ENCODE measurements at regions of chr2 and their contacts with region 1.

Region 1: GRCh38 chr2:26144953-26145680 is 27.8 kb upstream of the GAREM2 start:
- DNase-seq: peak in 5 of 6 donors; percentile 49 to 71 (median 55)
- ATAC-seq: peak; percentile 78 to 93 (median 88)
- H3K4me3 ChIP-seq: peak overlapping the region in 1 of 4 donors; percentile 15
- H3K27ac ChIP-seq: peak overlapping the region in 2 of 4 donors; percentile 58 to 66
- H3K4me1 ChIP-seq: peaks cover 4 to 8% (median 7%) of the 10 kb centered on the region in 3 donors
- H3K27me3 ChIP-seq: no peaks in the 10 kb centered on the region
- CTCF ChIP-seq: peak; percentile 18 to 62 (median 48)

Region 2: DNA sequence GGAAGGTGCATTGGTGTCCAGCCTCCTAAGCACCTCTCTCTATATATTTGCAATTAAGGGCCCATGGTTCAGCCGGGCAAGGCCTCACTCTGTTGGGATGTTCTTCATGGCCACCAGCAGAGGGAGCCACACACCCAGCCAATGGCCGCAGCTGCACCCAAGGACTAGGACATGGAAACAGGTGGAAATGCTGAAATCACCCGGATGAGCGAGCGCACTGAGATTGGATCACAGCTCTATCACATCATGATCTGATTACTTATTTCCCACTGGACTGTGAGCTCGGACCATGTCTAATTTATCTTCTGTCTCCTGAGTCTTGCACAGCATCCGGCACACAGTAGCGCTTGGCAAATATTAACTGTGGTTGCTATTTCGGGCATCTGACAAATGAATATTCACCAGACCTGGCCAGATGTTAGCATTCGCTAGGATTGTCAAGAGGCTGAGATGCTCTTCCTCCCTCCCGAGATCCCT is 194.0 kb before region 1 on chr2:
- intact Hi-C with region 1: loop called in 1 of 3 experiments (anchors 5 kb)
- DNase-seq: peak; percentile 82 to 93 (median 88)
- ATAC-seq: peak; percentile 97 to 100 (median 99)
- H3K4me3 ChIP-seq: peak overlapping the region in 2 of 4 donors; percentile 3 to 30
- H3K27ac ChIP-seq: no peak overlapping the region
- H3K4me1 ChIP-seq: no peaks in the 10 kb centered on the region
- H3K27me3 ChIP-seq: no peaks in the 10 kb centered on the region
- CTCF ChIP-seq: peak; percentile 87 to 91 (median 88)

Region 3: DNA sequence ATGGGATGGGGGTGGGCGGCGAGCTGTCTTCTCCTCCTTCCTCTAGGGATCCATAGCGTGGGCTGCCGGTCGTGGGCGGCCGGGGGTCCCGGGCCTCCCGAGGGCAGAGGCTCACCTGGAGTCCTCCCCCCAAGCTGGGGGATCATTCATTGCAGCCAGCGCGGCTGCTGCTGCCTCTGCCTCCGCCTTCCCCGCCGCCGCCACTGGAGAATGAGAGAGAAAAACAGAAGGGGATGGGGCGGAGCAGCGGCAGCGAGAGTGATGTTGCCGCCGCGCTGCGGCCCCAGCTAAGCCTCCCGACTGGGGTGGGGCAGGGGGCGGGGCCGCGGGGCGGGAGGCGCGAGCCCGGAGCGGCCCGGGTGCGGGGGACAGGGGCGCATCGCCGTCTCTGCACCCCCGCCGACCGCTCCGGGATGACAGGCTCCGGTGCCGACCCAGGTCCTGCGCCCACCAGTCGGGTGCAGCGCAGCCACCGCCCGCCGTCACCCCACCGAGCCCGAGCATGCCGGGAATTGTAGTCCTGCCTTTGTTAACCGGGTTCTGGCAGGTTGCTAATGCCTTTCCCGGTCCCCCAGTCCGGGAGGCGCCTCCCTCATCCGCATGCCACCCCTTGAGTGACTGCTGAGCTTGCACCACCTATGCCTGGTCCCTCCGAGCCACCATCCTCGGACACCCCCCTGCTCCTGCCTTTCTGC is 162.7 kb before region 1 on chr2 and contains the start of gene KIF3C:
- intact Hi-C with region 1: loop called in 1 of 3 experiments (anchors 10 kb)
- DNase-seq: peak; percentile 50 to 78 (median 62)
- ATAC-seq: peak; percentile 76 to 89 (median 87)
- H3K4me3 ChIP-seq: peak within 1 kb of the TSS; percentile 69 to 85 (median 80)
- H3K27ac ChIP-seq: peak within 1 kb of the TSS in 2 of 4 donors; percentile 44 to 54
- H3K4me1 ChIP-seq: no peaks in the 10 kb centered on the region
- H3K27me3 ChIP-seq: no peaks in the 10 kb centered on the region
- CTCF ChIP-seq: no peak
- total RNA-seq, gene KIF3C: 0.38 to 8.2 (median 2.0) TPM

Region 4: DNA sequence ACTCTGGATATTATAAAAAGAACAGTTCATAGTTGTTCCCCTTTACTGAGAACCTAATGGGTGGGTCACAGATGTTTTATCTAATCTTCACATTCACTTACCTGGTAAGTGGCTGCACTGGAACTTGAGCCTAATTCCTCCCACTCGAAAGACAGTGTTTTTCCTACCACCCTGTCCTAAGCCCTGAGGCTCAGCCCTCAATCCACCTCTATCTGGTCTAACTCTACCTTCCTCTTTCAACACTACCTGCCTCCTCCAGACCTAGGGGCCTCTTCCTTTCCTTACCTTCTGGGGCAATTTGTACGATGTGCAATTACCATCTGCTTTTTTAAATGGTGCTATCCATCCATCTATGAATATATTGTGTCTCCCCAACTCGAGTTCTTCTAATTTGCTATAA is 153.2 kb before region 1 on chr2:
- intact Hi-C with region 1: loop called in 2 of 3 experiments (anchors 5 to 10 kb)
- DNase-seq: no peak
- ATAC-seq: peak; percentile 32 to 65 (median 56)
- H3K4me3 ChIP-seq: no peak overlapping the region
- H3K27ac ChIP-seq: no peak overlapping the region
- H3K4me1 ChIP-seq: peaks cover 0 to 6% (median 5%) of the 10 kb centered on the region in 3 donors
- H3K27me3 ChIP-seq: no peaks in the 10 kb centered on the region
- CTCF ChIP-seq: no peak

Region 5: GRCh38 chr2:26355038-26355995 is 210.2 kb after region 1 on chr2:
- intact Hi-C with region 1: no loop called
- DNase-seq: no peak
- ATAC-seq: peak in 1 of 4 donors; percentile 12
- H3K4me3 ChIP-seq: no peak overlapping the region
- H3K27ac ChIP-seq: no peak overlapping the region
- H3K4me1 ChIP-seq: peaks cover 6 to 10% (median 7%) of the 10 kb centered on the region in 3 donors
- H3K27me3 ChIP-seq: no peaks in the 10 kb centered on the region
- CTCF ChIP-seq: no peak

Measured in pancreas (tissue), 10 donors.